Aorta (tissue), 5 donors: ENCODE measurements at regions of chr17 and their contacts with region 1.

Region 1: DNA sequence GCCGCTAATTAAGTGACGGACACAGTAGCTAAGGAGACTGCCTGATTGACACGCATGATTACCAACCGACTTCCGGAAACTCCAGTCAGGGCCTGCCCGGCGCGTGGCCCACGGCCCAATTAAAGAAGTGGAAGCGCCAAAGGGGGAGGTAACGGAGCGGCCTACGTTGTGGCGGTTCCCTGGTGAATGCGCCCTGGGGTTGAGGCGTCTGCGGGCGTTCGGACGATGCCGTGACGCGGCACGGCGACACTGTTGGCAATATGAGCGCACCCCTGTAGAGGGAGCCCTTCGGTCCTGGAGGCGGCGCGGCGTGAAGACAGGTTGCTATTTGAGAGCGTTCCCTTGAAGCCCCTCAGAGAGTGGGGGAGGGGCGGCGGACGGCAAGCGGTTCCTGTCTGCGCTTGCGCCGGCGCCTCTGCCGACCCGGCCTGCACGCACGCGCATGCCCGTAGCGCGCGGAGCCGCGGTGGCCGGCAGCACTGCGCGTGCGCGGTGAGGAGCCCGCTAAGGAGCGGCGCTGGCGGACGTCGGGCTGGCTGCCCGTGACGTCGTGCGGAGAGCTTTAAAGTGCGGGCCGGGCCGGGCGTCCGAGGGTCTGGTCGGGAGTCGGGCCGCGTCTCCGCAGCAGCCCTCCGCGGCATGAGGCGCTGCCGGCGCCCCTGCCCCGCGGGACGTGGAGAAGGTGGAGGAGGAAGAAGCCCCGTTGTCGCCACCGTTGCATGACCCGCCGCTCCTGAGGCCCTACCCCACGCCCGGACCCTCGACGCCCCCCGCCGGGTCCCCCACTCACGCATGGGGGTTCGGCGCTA is at the start of gene ALKBH5:
- DNase-seq: peak; percentile 98
- ATAC-seq: peak; percentile 94
- H3K4me3 ChIP-seq: peak within 1 kb of the TSS; percentile 58 to 71
- H3K27ac ChIP-seq: peak within 1 kb of the TSS; percentile 89 to 95
- H3K4me1 ChIP-seq: peaks cover 0 to 5% of the 10 kb centered on the region in 2 donors
- H3K27me3 ChIP-seq: no peaks in the 10 kb centered on the region
- total RNA-seq, gene ALKBH5: 91.5 to 114 TPM

Region 2: GRCh38 chr17:18087610-18088491 is 95.7 kb before region 1 on chr17 and contains the start of gene DRG2:
- intact Hi-C with region 1: loop called in 1 of 2 experiments (anchors 5 kb)
- DNase-seq: peak; percentile 94 to 97
- ATAC-seq: peak; percentile 98
- H3K4me3 ChIP-seq: peak within 1 kb of the TSS; percentile 86 to 87
- H3K27ac ChIP-seq: peak within 1 kb of the TSS in 1 of 2 donors; percentile 6
- H3K4me1 ChIP-seq: no peaks in the 10 kb centered on the region
- H3K27me3 ChIP-seq: no peaks in the 10 kb centered on the region
- total RNA-seq, gene DRG2: 28.7 to 33.7 TPM

Region 3: DNA sequence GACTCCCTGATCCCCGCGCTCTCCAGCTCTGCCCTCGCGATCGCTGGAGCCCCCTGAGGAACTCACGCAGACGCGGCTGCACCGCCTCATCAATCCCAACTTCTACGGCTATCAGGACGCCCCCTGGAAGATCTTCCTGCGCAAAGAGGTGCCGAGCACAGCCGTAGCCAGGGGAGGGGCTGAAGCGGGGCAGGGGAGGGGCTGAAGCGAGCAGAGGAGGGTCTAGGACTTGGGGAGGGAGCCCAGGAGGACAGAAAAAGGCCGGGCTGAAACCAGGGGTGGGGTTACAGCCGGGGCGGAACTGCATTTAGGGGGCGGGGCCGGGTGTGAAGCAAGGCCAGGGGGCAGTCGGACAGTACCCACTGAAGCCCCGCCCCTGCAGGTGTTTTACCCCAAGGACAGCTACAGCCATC is 29.8 kb before region 1 on chr17:
- intact Hi-C with region 1: loop called in 1 of 2 experiments (anchors 2 kb)
- DNase-seq: peak; percentile 93
- ATAC-seq: peak; percentile 84
- H3K4me3 ChIP-seq: peak overlapping the region; percentile 43 to 51
- H3K27ac ChIP-seq: no peak overlapping the region
- H3K4me1 ChIP-seq: no peaks in the 10 kb centered on the region
- H3K27me3 ChIP-seq: no peaks in the 10 kb centered on the region

Region 4: GRCh38 chr17:18166894-18167293 is 16.6 kb before region 1 on chr17:
- intact Hi-C with region 1: no loop called
- DNase-seq: no peak
- ATAC-seq: no peak
- H3K4me3 ChIP-seq: no peak overlapping the region
- H3K27ac ChIP-seq: no peak overlapping the region
- H3K4me1 ChIP-seq: no peaks in the 10 kb centered on the region
- H3K27me3 ChIP-seq: no peaks in the 10 kb centered on the region